Caco-2 (cell line): ENCODE measurements at regions of chr17 and their contacts with region 1.

Region 1: GRCh38 chr17:33284022-33284421 is 9.1 kb downstream of the ASIC2 start:
- DNase-seq: no peak
- H3K4me3 ChIP-seq: no peak overlapping the region
- H3K4me3 Mint-ChIP-seq: no peak overlapping the region
- H3K27ac Mint-ChIP-seq: no peak overlapping the region
- H3K4me1 ChIP-seq: no peaks in the 10 kb centered on the region
- H3K4me1 Mint-ChIP-seq: no peaks in the 10 kb centered on the region
- H3K27me3 ChIP-seq: peaks cover 1% of the 10 kb centered on the region; the same call in 1 of the 2 replicates
- H3K27me3 Mint-ChIP-seq: peaks cover 12% of the 10 kb centered on the region
- CTCF ChIP-seq: no peak

Region 2: DNA sequence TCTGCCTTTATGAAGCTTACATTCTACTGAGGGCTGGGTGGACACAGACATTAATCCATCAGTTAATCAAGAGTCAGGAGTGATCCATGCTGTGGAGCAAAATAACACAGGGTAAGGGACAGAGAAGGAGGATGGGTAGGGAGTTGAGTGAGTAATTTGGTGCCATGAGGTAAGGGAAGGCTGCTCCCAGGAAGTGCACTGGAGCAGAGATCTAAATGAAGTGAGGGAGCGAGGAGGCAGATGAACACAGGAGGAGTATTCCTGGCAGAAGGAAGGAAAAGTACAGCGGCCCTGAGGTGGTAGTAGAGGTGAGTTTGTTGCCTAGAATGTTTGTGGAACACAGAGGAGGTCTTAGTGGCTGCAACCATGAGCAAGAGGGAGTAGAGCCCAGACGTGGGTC is 25.7 kb before region 1 on chr17:
- CTCF ChIA-PET with region 1: no interaction called
- POLR2A ChIA-PET with region 1: no interaction called
- intact Hi-C with region 1: loop called (anchors 5 kb)
- DNase-seq: no peak
- H3K4me3 ChIP-seq: no peak overlapping the region
- H3K4me3 Mint-ChIP-seq: no peak overlapping the region
- H3K27ac Mint-ChIP-seq: no peak overlapping the region
- H3K4me1 ChIP-seq: no peaks in the 10 kb centered on the region
- H3K4me1 Mint-ChIP-seq: no peaks in the 10 kb centered on the region
- H3K27me3 ChIP-seq: peaks cover 1% of the 10 kb centered on the region
- H3K27me3 Mint-ChIP-seq: peaks cover 20% of the 10 kb centered on the region
- CTCF ChIP-seq: no peak

Region 3: GRCh38 chr17:33381201-33381600 is 97.2 kb after region 1 on chr17:
- CTCF ChIA-PET with region 1: no interaction called
- POLR2A ChIA-PET with region 1: no interaction called
- intact Hi-C with region 1: loop called (anchors 10 kb)
- DNase-seq: no peak
- H3K4me3 ChIP-seq: no peak overlapping the region
- H3K4me3 Mint-ChIP-seq: no peak overlapping the region
- H3K27ac Mint-ChIP-seq: no peak overlapping the region
- H3K4me1 ChIP-seq: peaks cover 30% of the 10 kb centered on the region
- H3K4me1 Mint-ChIP-seq: peaks cover 25% of the 10 kb centered on the region
- H3K27me3 ChIP-seq: no peaks in the 10 kb centered on the region
- H3K27me3 Mint-ChIP-seq: no peaks in the 10 kb centered on the region
- CTCF ChIP-seq: no peak

Region 4: DNA sequence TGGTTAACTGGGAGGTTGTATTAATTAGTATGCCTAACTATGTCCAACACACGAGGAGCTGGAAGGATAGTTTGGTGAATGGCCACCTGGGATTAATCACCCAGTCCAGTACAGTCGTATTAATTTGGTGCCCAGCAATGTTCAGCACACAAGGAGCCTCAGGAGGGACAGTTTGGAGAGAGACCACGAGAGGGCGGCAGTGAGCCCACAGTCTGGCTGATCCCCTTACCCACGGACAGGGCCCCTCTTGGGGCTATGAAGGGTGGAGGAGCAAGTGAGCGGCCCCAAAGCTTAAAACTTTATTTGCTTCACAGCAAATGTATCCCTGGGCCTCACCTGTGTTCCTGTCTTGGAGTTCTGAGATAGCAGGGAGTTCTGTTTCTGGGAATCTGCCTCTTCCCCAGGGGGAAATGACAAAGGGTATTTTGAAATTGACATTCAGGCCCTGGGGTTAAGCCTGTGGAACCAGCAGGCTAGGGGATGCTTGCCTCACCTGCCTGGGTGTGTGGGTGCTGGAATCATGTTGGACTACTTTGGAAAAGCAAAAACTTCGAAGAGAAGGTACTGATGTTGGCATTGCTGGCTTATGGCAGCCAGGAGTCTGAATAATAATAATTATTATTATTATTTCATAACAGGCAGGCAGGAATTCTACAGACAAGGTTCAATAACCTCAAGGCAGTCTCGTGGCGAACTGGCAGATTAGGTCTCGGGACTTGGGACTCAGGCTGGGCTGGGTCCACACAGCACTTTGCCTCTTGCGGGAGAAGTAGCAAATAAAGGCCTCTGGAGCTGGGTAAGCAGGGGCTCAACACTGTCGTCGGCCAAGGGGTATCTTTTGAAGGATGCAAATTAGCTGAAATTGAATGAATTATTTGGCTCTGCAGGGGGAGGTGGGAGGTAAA is 236.7 kb after region 1 on chr17:
- CTCF ChIA-PET with region 1: interaction called, 4 read pairs
- POLR2A ChIA-PET with region 1: no interaction called
- intact Hi-C with region 1: loop called (anchors 5 kb)
- DNase-seq: peak; percentile 70 to 75
- H3K4me3 ChIP-seq: no peak overlapping the region
- H3K4me3 Mint-ChIP-seq: no peak overlapping the region
- H3K27ac Mint-ChIP-seq: no peak overlapping the region
- H3K4me1 ChIP-seq: no peaks in the 10 kb centered on the region
- H3K4me1 Mint-ChIP-seq: no peaks in the 10 kb centered on the region
- H3K27me3 ChIP-seq: no peaks in the 10 kb centered on the region; the same call in none of the 2 replicates
- H3K27me3 Mint-ChIP-seq: peaks cover 16% of the 10 kb centered on the region
- CTCF ChIP-seq: peak; percentile 85 to 89

Region 5: GRCh38 chr17:33647956-33648355 is 363.9 kb after region 1 on chr17:
- CTCF ChIA-PET with region 1: interaction called, 4 read pairs
- POLR2A ChIA-PET with region 1: no interaction called
- intact Hi-C with region 1: loop called (anchors 1 kb)
- DNase-seq: peak in 1 of 2 experiments; percentile 28
- H3K4me3 ChIP-seq: no peak overlapping the region
- H3K4me3 Mint-ChIP-seq: no peak overlapping the region
- H3K27ac Mint-ChIP-seq: no peak overlapping the region
- H3K4me1 ChIP-seq: no peaks in the 10 kb centered on the region
- H3K4me1 Mint-ChIP-seq: no peaks in the 10 kb centered on the region
- H3K27me3 ChIP-seq: no peaks in the 10 kb centered on the region
- H3K27me3 Mint-ChIP-seq: peaks cover 29% of the 10 kb centered on the region
- CTCF ChIP-seq: peak; percentile 70 to 80

Region 6: DNA sequence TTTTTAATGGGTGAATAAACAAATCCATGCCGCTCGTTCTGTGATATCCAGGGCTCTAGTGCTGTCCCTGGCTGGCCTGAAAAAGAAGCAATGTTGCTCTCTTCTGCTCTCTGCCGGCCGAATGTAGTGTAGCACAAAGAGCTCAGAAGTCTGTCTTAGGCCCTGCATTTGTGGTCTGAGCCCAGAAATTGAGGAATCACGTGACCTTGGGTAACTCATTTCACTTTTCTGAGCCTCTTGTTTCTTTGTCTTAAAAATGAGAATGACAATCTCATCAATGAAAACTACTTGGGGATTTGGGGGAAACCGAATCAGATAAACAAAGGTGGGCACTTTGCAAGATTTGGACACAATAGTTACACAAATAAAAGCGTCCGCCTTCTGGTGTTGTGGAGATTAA is 390.7 kb after region 1 on chr17:
- CTCF ChIA-PET with region 1: no interaction called
- POLR2A ChIA-PET with region 1: no interaction called
- intact Hi-C with region 1: loop called (anchors 1 kb)
- DNase-seq: peak; percentile 63 to 65
- H3K4me3 ChIP-seq: no peak overlapping the region
- H3K4me3 Mint-ChIP-seq: no peak overlapping the region
- H3K27ac Mint-ChIP-seq: no peak overlapping the region
- H3K4me1 ChIP-seq: no peaks in the 10 kb centered on the region
- H3K4me1 Mint-ChIP-seq: no peaks in the 10 kb centered on the region
- H3K27me3 ChIP-seq: no peaks in the 10 kb centered on the region; the same call in none of the 2 replicates
- H3K27me3 Mint-ChIP-seq: peaks cover 18% of the 10 kb centered on the region
- CTCF ChIP-seq: peak; percentile 48 to 81